CD14-positive monocyte (primary cell): ENCODE measurements at regions of chr12 and their contacts with region 1.

Region 1: GRCh38 chr12:122054842-122055520 is 23.6 kb upstream of the MLXIP start:
- DNase-seq: no peak
- H3K4me3 ChIP-seq: no peak overlapping the region
- H3K4me3 Mint-ChIP-seq: no peak overlapping the region
- H3K27ac ChIP-seq: no peak overlapping the region
- H3K27ac Mint-ChIP-seq: no peak overlapping the region
- H3K4me1 ChIP-seq: peaks cover 2 to 6% of the 10 kb centered on the region in 2 donors
- H3K4me1 Mint-ChIP-seq: peaks cover 7% of the 10 kb centered on the region
- H3K27me3 ChIP-seq: no peaks in the 10 kb centered on the region
- H3K27me3 Mint-ChIP-seq: peaks cover 0 to 2% (median 0%) of the 10 kb centered on the region in 3 donors
- CTCF ChIP-seq: no peak

Region 2: DNA sequence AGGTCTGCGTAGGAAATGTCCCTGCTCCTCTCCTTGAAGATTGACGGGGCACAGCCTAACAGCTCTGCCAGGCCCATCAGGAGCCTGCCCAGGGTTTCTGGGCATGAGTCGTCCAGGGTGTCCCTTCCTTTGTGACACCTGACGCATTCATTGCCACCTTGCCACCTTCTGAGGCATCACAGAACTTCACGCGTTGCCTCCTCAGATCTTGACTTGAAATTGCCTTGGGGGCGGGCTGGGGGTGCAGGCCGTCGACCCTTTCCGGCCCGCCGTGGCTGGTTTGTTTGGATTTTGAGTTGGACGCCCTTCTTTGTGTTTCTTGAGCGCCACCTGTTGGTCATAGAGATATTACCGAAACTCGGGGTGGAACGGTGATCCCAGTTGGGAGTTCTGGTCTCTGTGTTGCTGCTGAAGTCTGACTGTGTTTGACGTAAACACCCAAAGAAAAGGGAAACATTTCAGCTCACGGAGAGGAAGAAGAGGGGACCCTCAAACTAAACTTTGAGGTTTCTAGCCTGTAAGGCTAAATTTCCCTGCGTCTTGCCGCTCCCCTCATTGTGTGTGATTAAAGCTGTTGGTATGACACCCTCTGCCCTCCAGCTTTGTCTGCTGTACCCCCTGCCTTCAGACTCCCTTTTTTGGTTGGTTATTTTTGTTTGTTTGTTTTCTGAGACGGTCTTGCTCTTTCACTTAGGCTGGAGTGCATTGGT is 68.2 kb after region 1 on chr12:
- intact Hi-C with region 1: loop called (anchors 1 to 2 kb)
- DNase-seq: peak; percentile 44 to 55 (median 52)
- H3K4me3 ChIP-seq: no peak overlapping the region
- H3K4me3 Mint-ChIP-seq: peak overlapping the region in 1 of 2 donors; percentile 69
- H3K27ac ChIP-seq: peak overlapping the region in 1 of 2 donors; percentile 40
- H3K27ac Mint-ChIP-seq: peak overlapping the region in 6 of 7 donors; percentile 5 to 84 (median 66)
- H3K4me1 ChIP-seq: peaks cover 14% of the 10 kb centered on the region in 2 donors
- H3K4me1 Mint-ChIP-seq: peaks cover 37% of the 10 kb centered on the region
- H3K27me3 ChIP-seq: no peaks in the 10 kb centered on the region
- H3K27me3 Mint-ChIP-seq: no peaks in the 10 kb centered on the region
- CTCF ChIP-seq: peak; percentile 89